Mammary epithelial cell (primary cell): ENCODE measurements at regions of chr11 and their contacts with region 1.

Region 1: GRCh38 chr11:64778508-64779346 is at the start of gene SF1:
- DNase-seq: peak; percentile 100
- H3K4me3 ChIP-seq: peak within 1 kb of the TSS; percentile 84 to 90 (median 86)
- H3K27ac ChIP-seq: peak within 1 kb of the TSS; percentile 96
- H3K4me1 ChIP-seq: peaks cover 22% of the 10 kb centered on the region
- H3K27me3 ChIP-seq: no peaks in the 10 kb centered on the region
- CTCF ChIP-seq: no peak
- total RNA-seq, gene SF1: 115 to 294 TPM

Region 2: DNA sequence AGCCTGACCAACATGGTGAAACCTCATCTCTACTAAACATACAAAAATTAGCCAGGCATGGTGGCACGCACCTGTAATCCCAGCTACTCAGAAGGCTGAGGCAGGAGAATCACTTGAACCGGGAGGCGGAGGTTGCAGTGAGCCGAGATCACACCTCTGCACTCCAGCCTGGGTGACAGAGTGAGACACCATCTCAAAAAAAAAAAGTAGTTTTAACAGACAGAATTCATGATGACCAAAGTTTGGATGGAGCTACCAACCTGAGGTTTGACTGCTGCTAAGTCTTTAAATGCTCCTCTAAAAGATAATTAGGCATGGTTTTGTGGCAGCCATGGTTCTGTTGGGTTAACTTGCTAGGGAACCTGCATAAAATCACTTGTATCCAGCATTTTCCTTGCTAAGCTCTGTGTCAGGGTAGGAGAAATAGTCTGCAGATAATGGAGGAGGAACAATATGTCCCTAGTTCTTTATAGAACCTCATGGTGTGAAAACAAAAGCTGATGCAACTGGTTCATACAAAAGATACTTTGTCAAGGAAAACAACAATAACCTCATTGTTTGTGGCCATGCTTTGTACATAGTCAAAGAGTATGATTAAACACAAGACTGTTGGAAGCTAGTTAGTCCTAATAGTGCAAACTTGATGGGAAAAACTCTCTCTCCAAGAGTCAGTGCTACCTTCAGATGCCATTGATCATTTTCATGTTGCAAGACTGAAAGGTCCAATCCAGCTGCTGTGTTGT is 1195.6 kb before region 1 on chr11:
- CTCF ChIA-PET with region 1: no interaction called
- dilution Hi-C with region 1: no loop called
- in situ Hi-C with region 1: no loop called
- intact Hi-C with region 1: no loop called
- DNase-seq: peak; percentile 68
- H3K4me3 ChIP-seq: no peak overlapping the region
- H3K27ac ChIP-seq: no peak overlapping the region
- H3K4me1 ChIP-seq: peaks cover 8% of the 10 kb centered on the region
- H3K27me3 ChIP-seq: no peaks in the 10 kb centered on the region
- CTCF ChIP-seq: no peak

Region 3: DNA sequence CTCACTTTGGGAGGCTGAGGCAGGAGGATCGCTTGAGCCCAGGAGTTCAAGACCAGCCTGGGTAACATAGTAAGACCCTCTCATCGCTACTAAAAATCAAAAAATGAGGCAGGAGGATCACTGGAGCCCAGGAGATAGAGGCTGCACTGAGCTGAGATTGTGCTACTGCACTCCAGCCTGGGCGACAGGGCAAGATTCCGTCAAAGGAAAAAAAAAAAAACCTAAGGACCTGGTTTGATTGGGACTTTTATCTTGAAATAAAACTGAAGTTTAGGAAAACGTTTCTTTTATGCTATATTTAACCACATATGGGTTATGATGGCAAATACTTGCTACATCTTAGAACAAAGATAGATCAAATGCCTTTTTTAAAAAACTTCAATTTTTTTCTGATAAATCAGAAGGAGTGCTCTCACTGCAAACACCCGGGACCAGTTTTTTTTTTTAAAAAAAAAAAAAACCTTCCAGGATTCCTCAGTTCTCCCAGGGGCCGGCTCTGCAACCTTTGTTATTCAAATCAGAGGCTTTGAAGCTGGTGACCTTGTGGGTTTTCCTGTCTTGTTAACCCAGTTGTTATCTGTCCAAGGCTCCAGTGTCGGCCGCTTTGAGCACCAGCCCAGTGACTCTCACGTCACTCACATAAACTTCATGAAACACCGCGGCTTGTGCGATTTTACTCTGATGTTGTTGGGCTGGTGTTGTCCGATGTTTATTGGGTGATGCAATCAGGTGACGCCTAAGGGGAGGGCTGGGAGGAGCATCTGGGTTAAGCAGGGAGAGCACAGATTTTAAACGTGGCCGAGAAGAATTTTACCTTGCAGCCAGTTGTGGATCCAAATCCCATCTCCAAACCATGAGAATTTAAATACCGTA is 212.4 kb before region 1 on chr11:
- CTCF ChIA-PET with region 1: no interaction called
- dilution Hi-C with region 1: no loop called
- in situ Hi-C with region 1: no loop called
- intact Hi-C with region 1: no loop called
- DNase-seq: peak; percentile 70
- H3K4me3 ChIP-seq: no peak overlapping the region
- H3K27ac ChIP-seq: no peak overlapping the region
- H3K4me1 ChIP-seq: peaks cover 7% of the 10 kb centered on the region
- H3K27me3 ChIP-seq: no peaks in the 10 kb centered on the region
- CTCF ChIP-seq: no peak

Region 4: GRCh38 chr11:64767344-64768299 is 11.1 kb before region 1 on chr11:
- CTCF ChIA-PET with region 1: no interaction called
- dilution Hi-C with region 1: no loop called
- in situ Hi-C with region 1: no loop called
- intact Hi-C with region 1: loop called (anchors 1 kb)
- DNase-seq: no peak
- H3K4me3 ChIP-seq: no peak overlapping the region
- H3K27ac ChIP-seq: no peak overlapping the region
- H3K4me1 ChIP-seq: peaks cover 14% of the 10 kb centered on the region
- H3K27me3 ChIP-seq: no peaks in the 10 kb centered on the region
- CTCF ChIP-seq: peak; percentile 72 to 79

Region 5: GRCh38 chr11:64810271-64810890 is 31.7 kb after region 1 on chr11 and contains the start of gene MEN1:
- CTCF ChIA-PET with region 1: interaction called, 4 read pairs
- dilution Hi-C with region 1: no loop called
- in situ Hi-C with region 1: no loop called
- intact Hi-C with region 1: loop called (anchors 1 kb)
- DNase-seq: peak; percentile 94
- H3K4me3 ChIP-seq: peak within 1 kb of the TSS; percentile 85 to 99 (median 89)
- H3K27ac ChIP-seq: peak within 1 kb of the TSS; percentile 31
- H3K4me1 ChIP-seq: peaks cover 6% of the 10 kb centered on the region
- H3K27me3 ChIP-seq: no peaks in the 10 kb centered on the region
- CTCF ChIP-seq: no peak
- total RNA-seq, gene MEN1: 20.7 to 35.7 TPM

Region 6: DNA sequence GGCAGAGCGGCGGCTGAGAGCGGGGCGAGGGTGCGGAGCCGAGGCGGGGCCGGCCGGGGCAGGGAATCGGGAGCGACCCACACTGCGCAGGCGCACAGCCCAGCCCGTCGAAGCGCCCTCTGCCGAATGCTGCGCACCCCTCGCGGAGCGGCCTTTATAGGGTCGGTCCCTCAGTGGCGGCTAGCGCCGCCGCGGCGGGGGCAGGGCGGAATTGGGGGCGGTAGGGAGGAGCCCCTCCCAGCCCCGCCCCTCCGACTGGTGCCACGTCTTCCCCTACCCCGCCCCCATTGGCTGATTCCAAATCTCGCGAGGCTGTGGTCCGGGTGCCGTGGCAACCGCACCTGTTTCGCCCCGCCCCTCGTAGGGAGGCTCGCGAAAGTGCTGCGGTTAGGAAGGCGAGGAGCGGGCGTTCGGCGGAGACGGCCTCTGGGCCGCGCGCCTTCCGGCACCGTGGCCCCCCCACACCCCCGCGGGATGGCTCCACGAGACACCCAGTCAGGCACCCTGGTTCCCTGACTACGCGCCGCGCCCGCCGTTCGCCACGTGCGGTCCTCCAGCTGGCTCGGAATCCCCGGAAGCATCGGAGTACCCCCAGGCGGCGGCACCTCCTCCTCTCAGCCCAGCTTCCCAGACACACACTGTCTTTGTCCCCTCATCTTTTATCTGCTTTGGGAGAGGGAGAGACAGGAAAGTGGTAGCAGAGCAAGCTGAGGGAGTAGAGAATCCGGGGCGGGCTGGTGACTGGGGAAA is 99.9 kb after region 1 on chr11 and contains the start of gene EHD1:
- CTCF ChIA-PET with region 1: interaction called, 3 read pairs
- dilution Hi-C with region 1: no loop called
- in situ Hi-C with region 1: no loop called
- intact Hi-C with region 1: loop called (anchors 2 kb)
- DNase-seq: peak; percentile 96
- H3K4me3 ChIP-seq: peak within 1 kb of the TSS; percentile 64 to 99 (median 99)
- H3K27ac ChIP-seq: peak within 1 kb of the TSS; percentile 46
- H3K4me1 ChIP-seq: peaks cover 27% of the 10 kb centered on the region
- H3K27me3 ChIP-seq: no peaks in the 10 kb centered on the region
- CTCF ChIP-seq: peak; percentile 18 to 73
- total RNA-seq, gene EHD1: 71.2 to 172 TPM

Region 7: DNA sequence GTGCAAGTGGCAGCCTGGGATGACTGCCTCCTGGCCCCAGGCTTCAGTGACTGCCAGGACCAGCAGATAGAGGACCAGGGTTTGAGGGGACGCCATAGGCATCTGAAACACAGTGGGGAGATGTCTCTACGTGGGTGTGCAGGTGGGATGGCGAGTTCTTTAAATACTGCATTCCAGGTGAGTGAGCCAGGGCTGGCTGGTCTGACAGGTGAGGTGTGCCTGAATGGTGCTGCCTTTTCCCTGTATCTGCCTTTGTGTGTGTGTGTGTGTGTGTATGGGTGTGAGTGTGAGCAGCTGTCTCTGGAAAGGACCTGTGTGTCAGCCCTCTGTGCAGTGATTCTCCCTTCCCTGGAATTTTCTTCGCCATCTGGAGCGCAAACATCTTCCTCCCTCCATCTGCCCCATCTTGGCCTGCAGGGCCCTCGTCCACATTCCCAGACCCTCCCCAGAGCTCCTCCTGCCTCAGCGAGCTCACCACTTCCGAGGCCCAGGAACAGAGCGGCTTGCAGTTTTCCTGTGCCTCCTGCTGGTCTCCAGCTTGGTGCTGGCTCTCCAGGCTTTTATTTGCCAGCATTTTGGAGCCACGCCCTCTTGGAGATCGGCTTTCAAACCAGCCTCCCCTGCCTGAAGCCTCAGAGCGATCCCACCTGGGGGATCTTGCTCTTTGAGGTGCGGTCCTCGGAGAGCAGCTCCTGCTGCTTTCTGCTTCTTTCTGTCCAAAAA is 156.8 kb after region 1 on chr11 and contains the start of gene GPHA2:
- CTCF ChIA-PET with region 1: no interaction called
- dilution Hi-C with region 1: loop called (anchors 10 kb)
- in situ Hi-C with region 1: no loop called
- intact Hi-C with region 1: no loop called
- DNase-seq: no peak
- H3K4me3 ChIP-seq: no peak within 1 kb of the TSS
- H3K27ac ChIP-seq: no peak within 1 kb of the TSS
- H3K4me1 ChIP-seq: no peaks in the 10 kb centered on the region
- H3K27me3 ChIP-seq: no peaks in the 10 kb centered on the region
- CTCF ChIP-seq: no peak
- total RNA-seq, gene GPHA2: not detected

Region 8: GRCh38 chr11:64971421-64972233 is 192.9 kb after region 1 on chr11 and contains the start of gene MAJIN:
- CTCF ChIA-PET with region 1: no interaction called
- dilution Hi-C with region 1: no loop called
- in situ Hi-C with region 1: no loop called
- intact Hi-C with region 1: no loop called
- DNase-seq: no peak
- H3K4me3 ChIP-seq: no peak within 1 kb of the TSS
- H3K27ac ChIP-seq: peak within 1 kb of the TSS; percentile 36
- H3K4me1 ChIP-seq: peaks cover 20% of the 10 kb centered on the region
- H3K27me3 ChIP-seq: no peaks in the 10 kb centered on the region
- CTCF ChIP-seq: no peak
- total RNA-seq, gene MAJIN: not detected